Activated CD8-positive, alpha-beta T cell treated with anti-CD3 and anti-CD28 coated beads for 36 hours (primary cell): ENCODE measurements at regions of chr10 and their contacts with region 1.

Region 1: GRCh38 chr10:85256481-85256880 is 928.1 kb downstream of the CCSER2 start:
- DNase-seq: no peak
- ATAC-seq: no peak
- H3K4me3 Mint-ChIP-seq: no peak overlapping the region
- H3K27ac Mint-ChIP-seq: no peak overlapping the region
- H3K4me1 Mint-ChIP-seq: no peaks in the 10 kb centered on the region
- H3K27me3 Mint-ChIP-seq: no peaks in the 10 kb centered on the region
- CTCF ChIP-seq: no peak

Region 2: GRCh38 chr10:85235258-85235657 is 21.2 kb before region 1 on chr10:
- CTCF ChIA-PET with region 1: no interaction called
- POLR2A ChIA-PET with region 1: no interaction called
- intact Hi-C with region 1: no loop called
- DNase-seq: no peak
- ATAC-seq: no peak
- H3K4me3 Mint-ChIP-seq: no peak overlapping the region
- H3K27ac Mint-ChIP-seq: no peak overlapping the region
- H3K4me1 Mint-ChIP-seq: no peaks in the 10 kb centered on the region
- H3K27me3 Mint-ChIP-seq: peaks cover 1% of the 10 kb centered on the region
- CTCF ChIP-seq: no peak

Region 3: GRCh38 chr10:85319826-85320225 is 63.3 kb after region 1 on chr10:
- CTCF ChIA-PET with region 1: no interaction called
- POLR2A ChIA-PET with region 1: no interaction called
- intact Hi-C with region 1: loop called (anchors 10 kb)
- DNase-seq: no peak
- ATAC-seq: no peak
- H3K4me3 Mint-ChIP-seq: no peak overlapping the region
- H3K27ac Mint-ChIP-seq: no peak overlapping the region
- H3K4me1 Mint-ChIP-seq: no peaks in the 10 kb centered on the region
- H3K27me3 Mint-ChIP-seq: no peaks in the 10 kb centered on the region
- CTCF ChIP-seq: no peak